Dorsolateral prefrontal cortex (tissue), 120 donors: ENCODE measurements at regions of chr1 and their contacts with region 1.

Region 1: GRCh38 chr1:54406339-54407153 is at the start of gene SSBP3:
- DNase-seq: peak; percentile 84 to 99 (median 92)
- H3K4me3 ChIP-seq: peak within 1 kb of the TSS; percentile 58 to 93 (median 82)
- H3K27ac ChIP-seq: peak within 1 kb of the TSS in 57 of 59 donors; percentile 36 to 98 (median 89)
- H3K27me3 ChIP-seq: no peaks in the 10 kb centered on the region
- CTCF ChIP-seq: peak in 24 of 56 donors; percentile 12 to 46 (median 27)
- total RNA-seq, gene SSBP3: 90.9 to 247 (median 178) TPM

Region 2: GRCh38 chr1:54121482-54122134 is 284.9 kb before region 1 on chr1:
- intact Hi-C with region 1: loop called (anchors 5 kb)
- DNase-seq: peak; percentile 71 to 89 (median 84)
- H3K4me3 ChIP-seq: peak overlapping the region in 57 of 59 donors; percentile 8 to 64 (median 43)
- H3K27ac ChIP-seq: peak overlapping the region in 4 of 59 donors; percentile 2 to 49 (median 22)
- H3K27me3 ChIP-seq: no peaks in the 10 kb centered on the region
- CTCF ChIP-seq: peak; percentile 33 to 90 (median 78)

Region 3: DNA sequence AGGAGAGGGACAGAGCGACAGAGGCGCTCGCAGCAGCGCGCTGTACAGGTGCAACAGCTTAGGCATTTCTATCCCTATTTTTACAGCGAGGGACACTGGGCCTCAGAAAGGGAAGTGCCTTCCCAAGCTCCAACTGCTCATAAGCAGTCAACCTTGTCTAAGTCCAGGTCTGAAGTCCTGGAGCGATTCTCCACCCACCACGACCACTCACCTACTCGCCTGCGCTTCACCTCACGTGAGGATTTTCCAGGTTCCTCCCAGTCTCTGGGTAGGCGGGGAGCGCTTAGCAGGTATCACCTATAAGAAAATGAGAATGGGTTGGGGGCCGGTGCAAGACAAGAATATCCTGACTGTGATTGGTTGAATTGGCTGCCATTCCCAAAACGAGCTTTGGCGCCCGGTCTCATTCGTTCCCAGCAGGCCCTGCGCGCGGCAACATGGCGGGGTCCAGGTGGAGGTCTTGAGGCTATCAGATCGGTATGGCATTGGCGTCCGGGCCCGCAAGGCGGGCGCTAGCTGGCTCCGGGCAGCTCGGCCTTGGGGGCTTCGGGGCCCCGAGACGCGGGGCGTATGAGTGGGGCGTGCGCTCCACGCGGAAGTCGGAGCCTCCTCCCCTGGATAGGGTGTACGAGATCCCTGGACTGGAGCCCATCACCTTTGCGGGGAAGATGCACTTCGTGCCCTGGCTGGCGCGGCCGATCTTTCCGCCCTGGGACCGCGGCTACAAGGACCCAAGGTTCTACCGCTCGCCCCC is 206.6 kb before region 1 on chr1 and contains the starts of genes CYB5RL and MRPL37:
- intact Hi-C with region 1: loop called in 1 of 2 experiments (anchors 5 kb)
- DNase-seq: peak; percentile 87 to 95 (median 94)
- H3K4me3 ChIP-seq: peak within 1 kb of the TSS; percentile 67 to 99 (median 90)
- H3K27ac ChIP-seq: peak within 1 kb of the TSS in 56 of 59 donors; percentile 13 to 95 (median 73)
- H3K27me3 ChIP-seq: no peaks in the 10 kb centered on the region
- CTCF ChIP-seq: peak in 23 of 56 donors; percentile 4 to 40 (median 17)
- total RNA-seq, gene CYB5RL: 3.6 to 19.4 (median 8.7) TPM
- total RNA-seq, gene MRPL37: 33.5 to 66.9 (median 49.5) TPM

Region 4: DNA sequence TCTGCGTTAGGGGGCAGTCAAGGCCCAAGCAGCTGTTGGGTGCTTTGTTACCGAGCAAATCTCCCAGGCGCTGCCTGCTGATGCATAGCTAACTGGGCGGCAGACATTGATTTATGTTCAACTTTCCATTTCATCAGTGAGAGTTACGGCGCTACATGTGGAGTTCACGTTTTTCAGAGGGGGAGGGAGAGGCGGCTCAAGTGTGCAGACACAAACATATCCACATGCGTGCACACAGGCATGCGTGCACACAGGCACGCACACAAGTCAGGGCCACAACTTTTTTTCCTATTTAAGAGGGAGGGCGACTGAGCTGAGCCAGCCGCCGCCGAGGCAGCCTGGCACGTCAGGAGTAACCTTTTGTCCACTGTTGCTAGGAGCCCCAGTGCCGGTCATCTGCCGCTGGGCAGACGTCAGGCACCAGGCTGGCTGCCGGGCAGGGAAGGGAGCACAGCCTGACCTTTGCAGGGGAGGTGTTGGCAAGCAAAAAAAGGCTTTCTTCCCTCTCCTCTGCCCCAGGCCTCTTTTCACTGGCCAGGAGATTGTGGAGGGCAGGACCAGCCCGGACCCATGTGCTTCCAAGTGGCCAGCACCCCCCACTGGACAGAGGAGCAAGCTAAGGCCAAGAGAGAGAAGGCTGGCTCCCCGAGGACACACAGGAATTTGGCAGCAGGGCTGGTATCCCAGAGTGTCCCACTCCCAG is 133.3 kb before region 1 on chr1:
- intact Hi-C with region 1: loop called (anchors 2 to 5 kb)
- DNase-seq: peak; percentile 54 to 89 (median 80)
- H3K4me3 ChIP-seq: peak overlapping the region in 52 of 59 donors; percentile 1 to 51 (median 30)
- H3K27ac ChIP-seq: peak overlapping the region; percentile 30 to 92 (median 81)
- H3K27me3 ChIP-seq: no peaks in the 10 kb centered on the region
- CTCF ChIP-seq: peak in 50 of 56 donors; percentile 0 to 82 (median 64)

Region 5: GRCh38 chr1:54323324-54323739 is 83.2 kb before region 1 on chr1:
- intact Hi-C with region 1: loop called in 1 of 2 experiments (anchors 10 kb)
- DNase-seq: no peak
- H3K4me3 ChIP-seq: no peak overlapping the region
- H3K27ac ChIP-seq: peak overlapping the region in 47 of 59 donors; percentile 13 to 96 (median 85)
- H3K27me3 ChIP-seq: no peaks in the 10 kb centered on the region
- CTCF ChIP-seq: no peak

Region 6: GRCh38 chr1:54361342-54361741 is 45.2 kb before region 1 on chr1:
- intact Hi-C with region 1: loop called (anchors 5 kb)
- DNase-seq: peak in 6 of 10 donors; percentile 58 to 73 (median 64)
- H3K4me3 ChIP-seq: no peak overlapping the region
- H3K27ac ChIP-seq: peak overlapping the region in 28 of 59 donors; percentile 3 to 92 (median 46)
- H3K27me3 ChIP-seq: no peaks in the 10 kb centered on the region
- CTCF ChIP-seq: peak in 53 of 56 donors; percentile 26 to 80 (median 52)

Region 7: GRCh38 chr1:54459726-54460191 is 53.2 kb after region 1 on chr1:
- intact Hi-C with region 1: no loop called
- DNase-seq: no peak
- H3K4me3 ChIP-seq: no peak overlapping the region
- H3K27ac ChIP-seq: no peak overlapping the region
- H3K27me3 ChIP-seq: no peaks in the 10 kb centered on the region
- CTCF ChIP-seq: no peak